Panc1 (cell line): ENCODE measurements at regions of chr7 and their contacts with region 1.

Region 1: GRCh38 chr7:15280078-15280733 is 281.6 kb downstream of the AGMO start:
- DNase-seq: no peak
- ATAC-seq: no peak
- H3K4me3 ChIP-seq: no peak overlapping the region
- H3K27ac ChIP-seq: no peak overlapping the region
- H3K4me1 ChIP-seq: no peaks in the 10 kb centered on the region
- H3K27me3 ChIP-seq: no peaks in the 10 kb centered on the region
- CTCF ChIP-seq: no peak

Region 2: GRCh38 chr7:15836041-15836440 is 555.8 kb after region 1 on chr7:
- CTCF ChIA-PET with region 1: interaction called, 10 read pairs
- POLR2A ChIA-PET with region 1: no interaction called
- in situ Hi-C with region 1: no loop called
- intact Hi-C with region 1: no loop called
- DNase-seq: no peak
- ATAC-seq: no peak
- H3K4me3 ChIP-seq: no peak overlapping the region
- H3K27ac ChIP-seq: no peak overlapping the region
- H3K4me1 ChIP-seq: no peaks in the 10 kb centered on the region
- H3K27me3 ChIP-seq: no peaks in the 10 kb centered on the region
- CTCF ChIP-seq: no peak